ENCODE measurements at regions of chr4 and their contacts with region 1.

Region 1: GRCh38 chr4:31370866-31371465 is 650.8 kb downstream of the PCDH7 start:
- DNase-seq: peak; percentile 73
- H3K4me3 Mint-ChIP-seq: no peak overlapping the region
- H3K27ac Mint-ChIP-seq: no peak overlapping the region
- H3K4me1 Mint-ChIP-seq: no peaks in the 10 kb centered on the region
- H3K27me3 Mint-ChIP-seq: no peaks in the 10 kb centered on the region
- CTCF ChIP-seq: peak; percentile 66

Region 2: GRCh38 chr4:31045724-31046318 is 325.1 kb before region 1 on chr4:
- CTCF ChIA-PET with region 1: no interaction called
- POLR2A ChIA-PET with region 1: no interaction called
- intact Hi-C with region 1: loop called (anchors 5 kb)
- DNase-seq: peak; percentile 57
- H3K4me3 Mint-ChIP-seq: no peak overlapping the region
- H3K27ac Mint-ChIP-seq: no peak overlapping the region
- H3K4me1 Mint-ChIP-seq: peaks cover 9% of the 10 kb centered on the region
- H3K27me3 Mint-ChIP-seq: no peaks in the 10 kb centered on the region
- CTCF ChIP-seq: peak; percentile 55

Region 3: DNA sequence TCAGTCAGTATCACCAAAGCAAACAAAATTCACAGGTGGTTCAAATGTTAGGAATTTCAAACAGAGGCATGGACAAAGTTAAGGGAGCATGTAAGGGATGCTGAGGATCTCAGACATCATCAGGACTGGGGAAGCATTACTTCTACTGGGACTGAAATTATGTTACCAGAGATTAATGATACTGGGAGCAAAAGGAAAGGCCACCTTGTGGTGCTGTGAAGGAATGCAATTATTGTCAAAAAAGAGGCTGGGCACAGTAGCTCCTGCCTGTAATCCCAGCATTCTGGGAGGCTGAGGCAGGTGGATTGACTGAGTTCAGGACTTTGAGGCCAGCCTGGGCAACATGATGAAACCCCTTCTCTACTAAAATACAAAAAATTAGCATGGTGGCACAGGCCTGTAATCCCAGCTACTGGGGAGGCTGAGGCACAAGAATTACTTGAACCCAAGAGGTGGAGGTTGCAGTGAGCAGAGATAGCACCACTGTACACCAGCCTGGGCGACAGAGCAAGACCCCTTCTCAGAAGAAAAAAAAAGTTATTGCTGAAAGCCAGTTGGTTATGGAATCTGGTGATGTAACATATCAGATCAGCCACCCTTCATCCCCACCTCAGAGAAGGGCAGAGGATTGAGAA is 303.5 kb after region 1 on chr4:
- CTCF ChIA-PET with region 1: interaction called, 4 read pairs
- POLR2A ChIA-PET with region 1: no interaction called
- intact Hi-C with region 1: loop called (anchors 1 kb)
- DNase-seq: peak; percentile 43
- H3K4me3 Mint-ChIP-seq: no peak overlapping the region
- H3K27ac Mint-ChIP-seq: no peak overlapping the region
- H3K4me1 Mint-ChIP-seq: no peaks in the 10 kb centered on the region
- H3K27me3 Mint-ChIP-seq: no peaks in the 10 kb centered on the region
- CTCF ChIP-seq: peak; percentile 56

Region 4: DNA sequence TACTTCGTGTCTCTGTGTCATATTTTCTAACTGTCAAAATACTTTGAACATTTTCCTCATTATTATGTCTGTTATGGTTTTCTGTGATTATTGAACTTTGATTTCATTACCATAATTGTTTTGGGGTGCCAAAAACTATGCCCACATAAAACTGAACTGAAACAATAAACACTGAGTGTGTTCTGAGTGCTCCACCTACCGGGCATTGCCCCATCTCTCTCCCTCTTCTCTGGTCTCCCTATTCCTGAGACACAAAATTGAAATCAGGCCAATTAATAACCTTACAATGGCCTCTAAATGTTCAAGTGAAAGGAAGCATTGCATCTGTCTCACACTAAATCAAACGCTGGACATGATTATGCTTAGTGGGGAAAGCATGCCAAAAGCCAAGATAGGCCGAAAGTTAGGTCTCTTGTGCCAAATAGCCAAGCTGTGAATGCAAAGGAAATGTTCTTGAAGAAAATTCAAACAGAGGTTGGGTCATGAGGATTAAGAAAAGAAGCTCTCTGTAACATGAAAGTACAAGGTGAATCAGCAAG is 321.5 kb after region 1 on chr4:
- CTCF ChIA-PET with region 1: no interaction called
- POLR2A ChIA-PET with region 1: no interaction called
- intact Hi-C with region 1: loop called (anchors 1 kb)
- DNase-seq: peak; percentile 34
- H3K4me3 Mint-ChIP-seq: no peak overlapping the region
- H3K27ac Mint-ChIP-seq: peak overlapping the region; percentile 3
- H3K4me1 Mint-ChIP-seq: no peaks in the 10 kb centered on the region
- H3K27me3 Mint-ChIP-seq: no peaks in the 10 kb centered on the region
- CTCF ChIP-seq: peak; percentile 59

Region 5: GRCh38 chr4:32268863-32269262 is 897.9 kb after region 1 on chr4:
- CTCF ChIA-PET with region 1: no interaction called
- POLR2A ChIA-PET with region 1: no interaction called
- intact Hi-C with region 1: loop called (anchors 1 kb)
- DNase-seq: peak; percentile 7
- H3K4me3 Mint-ChIP-seq: no peak overlapping the region
- H3K27ac Mint-ChIP-seq: no peak overlapping the region
- H3K4me1 Mint-ChIP-seq: peaks cover 10% of the 10 kb centered on the region
- H3K27me3 Mint-ChIP-seq: no peaks in the 10 kb centered on the region
- CTCF ChIP-seq: no peak

Region 6: GRCh38 chr4:32775032-32775431 is 1404.1 kb after region 1 on chr4:
- CTCF ChIA-PET with region 1: no interaction called
- POLR2A ChIA-PET with region 1: no interaction called
- intact Hi-C with region 1: loop called (anchors 2 kb)
- DNase-seq: peak; percentile 65
- H3K4me3 Mint-ChIP-seq: no peak overlapping the region
- H3K27ac Mint-ChIP-seq: no peak overlapping the region
- H3K4me1 Mint-ChIP-seq: peaks cover 12% of the 10 kb centered on the region
- H3K27me3 Mint-ChIP-seq: no peaks in the 10 kb centered on the region
- CTCF ChIP-seq: peak; percentile 41

Measured in MCF 10A (cell line).